PC-9 (cell line): ENCODE measurements at regions of chr2 and their contacts with region 1.

Region 1: GRCh38 chr2:25558262-25558661 is 115.1 kb downstream of the DTNB start:
- DNase-seq: no peak
- H3K4me3 ChIP-seq: no peak overlapping the region
- H3K27ac ChIP-seq: no peak overlapping the region
- H3K4me1 ChIP-seq: no peaks in the 10 kb centered on the region
- H3K27me3 ChIP-seq: no peaks in the 10 kb centered on the region
- CTCF ChIP-seq: no peak

Region 2: DNA sequence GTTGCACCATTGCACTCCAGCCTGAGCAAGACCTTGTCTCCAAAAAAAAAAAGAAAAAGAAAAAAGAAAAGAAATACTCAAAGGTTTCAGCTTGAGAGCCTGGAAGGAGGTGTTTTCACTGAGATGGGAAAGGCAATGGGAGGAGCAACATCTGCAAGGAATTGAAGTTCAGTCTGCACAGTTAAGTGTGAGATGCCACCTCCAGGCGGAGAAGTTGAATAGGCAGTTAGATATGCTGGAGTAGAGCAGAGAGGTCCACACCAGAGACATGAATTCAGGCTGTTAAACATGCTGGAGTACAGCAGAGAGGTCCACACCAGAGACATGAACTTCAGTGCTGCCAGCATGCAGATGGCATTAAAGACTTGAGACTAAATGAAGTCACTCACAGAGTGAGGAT is 156.5 kb after region 1 on chr2:
- CTCF ChIA-PET with region 1: interaction called, 18 read pairs
- POLR2A ChIA-PET with region 1: no interaction called
- intact Hi-C with region 1: no loop called
- DNase-seq: peak in 1 of 2 experiments; percentile 54
- H3K4me3 ChIP-seq: no peak overlapping the region
- H3K27ac ChIP-seq: no peak overlapping the region
- H3K4me1 ChIP-seq: no peaks in the 10 kb centered on the region
- H3K27me3 ChIP-seq: no peaks in the 10 kb centered on the region
- CTCF ChIP-seq: no peak; the same call in 1 of the 2 replicates